Activated T-helper 1 cell treated with anti-CD3 and anti-CD28 coated beads, Interleukin-12 subunit alpha, Interleukin-12 subunit beta, Interleukin-2, Interleukin-4 antibody, amounts not matched to agents 30 ng/mL and 10 ng/mL and 1 ng/mL, durations not matched to agents 14 hours and 24 hours and 36 hours (primary cell): ENCODE measurements at regions of chr2 and their contacts with region 1.

Region 1: GRCh38 chr2:46776687-46777327 is 138.8 kb downstream of the MCFD2 start:
- DNase-seq: peak; percentile 5
- H3K4me3 Mint-ChIP-seq: no peak overlapping the region
- H3K27ac Mint-ChIP-seq: no peak overlapping the region
- H3K4me1 Mint-ChIP-seq: no peaks in the 10 kb centered on the region
- H3K27me3 Mint-ChIP-seq: peaks cover 9% of the 10 kb centered on the region

Region 2: GRCh38 chr2:46657042-46657504 is 119.7 kb before region 1 on chr2:
- intact Hi-C with region 1: loop called (anchors 1 kb)
- DNase-seq: no peak
- H3K4me3 Mint-ChIP-seq: no peak overlapping the region
- H3K27ac Mint-ChIP-seq: no peak overlapping the region
- H3K4me1 Mint-ChIP-seq: no peaks in the 10 kb centered on the region
- H3K27me3 Mint-ChIP-seq: peaks cover 30% of the 10 kb centered on the region

Region 3: GRCh38 chr2:46818121-46818888 is 41.5 kb after region 1 on chr2:
- intact Hi-C with region 1: no loop called
- DNase-seq: no peak
- H3K4me3 Mint-ChIP-seq: no peak overlapping the region
- H3K27ac Mint-ChIP-seq: no peak overlapping the region
- H3K4me1 Mint-ChIP-seq: no peaks in the 10 kb centered on the region
- H3K27me3 Mint-ChIP-seq: no peaks in the 10 kb centered on the region

Region 4: DNA sequence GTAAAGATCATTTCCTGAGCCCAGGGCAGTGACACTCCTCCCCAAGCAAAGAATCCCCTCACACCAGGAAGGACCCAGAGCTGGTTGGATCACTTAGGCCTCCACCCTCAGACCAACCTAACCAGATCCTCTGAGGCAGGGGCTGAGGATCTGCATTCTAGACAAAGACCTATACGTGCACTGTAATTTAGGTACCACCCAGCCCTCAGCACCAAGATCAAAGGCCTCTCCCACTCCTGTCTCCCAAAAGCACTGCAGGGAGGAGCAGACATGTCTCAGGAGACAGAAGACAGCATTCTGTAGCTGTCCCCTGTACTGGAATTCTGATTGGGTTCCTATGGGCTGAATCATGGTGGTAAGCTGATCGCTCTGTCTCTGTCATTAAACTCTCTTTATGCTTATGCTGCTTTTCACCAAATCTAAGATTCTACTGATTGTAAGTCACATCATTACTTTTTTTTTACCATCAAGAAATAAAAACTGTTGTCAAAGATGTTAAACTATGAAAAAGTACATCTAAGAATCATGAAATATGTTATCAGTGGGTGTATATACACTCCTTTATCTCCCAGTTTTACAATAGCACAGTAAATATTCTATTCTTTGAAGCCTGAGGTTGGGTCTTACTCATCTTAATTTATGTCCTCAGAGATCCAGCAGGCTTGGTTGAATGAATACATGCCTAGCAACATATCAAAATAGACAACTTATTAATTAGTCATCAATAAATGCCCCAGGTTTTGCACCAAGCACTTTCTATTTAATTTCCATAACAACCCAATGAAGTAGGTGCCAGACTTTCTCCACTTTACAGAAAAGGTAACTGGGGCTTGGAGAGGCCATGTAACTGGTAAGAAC is 110.5 kb after region 1 on chr2:
- intact Hi-C with region 1: loop called (anchors 5 kb)
- DNase-seq: no peak
- H3K4me3 Mint-ChIP-seq: no peak overlapping the region
- H3K27ac Mint-ChIP-seq: no peak overlapping the region
- H3K4me1 Mint-ChIP-seq: peaks cover 10% of the 10 kb centered on the region
- H3K27me3 Mint-ChIP-seq: peaks cover 16% of the 10 kb centered on the region